ENCODE measurements at regions of chr13 and their contacts with region 1.

Region 1: GRCh38 chr13:75418997-75419396 is 63.0 kb downstream of the TBC1D4 start:
- DNase-seq: no peak
- H3K4me3 ChIP-seq: no peak overlapping the region
- H3K27ac ChIP-seq: peak overlapping the region in 1 of 2 donors; percentile 19
- H3K4me1 ChIP-seq: peaks cover 0 to 26% of the 10 kb centered on the region in 2 donors
- H3K27me3 ChIP-seq: no peaks in the 10 kb centered on the region
- CTCF ChIP-seq: no peak
- POLR2A ChIP-seq: no peak

Region 2: DNA sequence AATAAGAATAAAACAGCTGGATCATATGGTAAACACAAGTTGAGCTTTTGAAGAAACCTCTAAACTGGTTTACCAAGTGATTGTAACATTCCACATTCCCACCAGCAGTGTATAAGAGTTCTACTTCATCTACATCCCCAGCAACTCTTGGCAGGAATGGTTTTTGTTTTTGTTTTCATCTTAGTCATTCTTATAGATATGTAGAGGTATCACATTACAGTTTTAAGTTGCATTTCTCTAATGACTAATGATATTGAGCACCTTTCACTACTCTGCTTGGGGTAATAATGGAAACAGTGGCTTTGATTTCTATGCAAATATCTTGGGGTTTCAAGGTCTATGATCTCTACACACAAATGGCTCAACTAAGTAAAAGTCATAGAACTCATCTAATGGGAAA is 551.5 kb before region 1 on chr13:
- intact Hi-C with region 1: no loop called
- DNase-seq: no peak
- H3K4me3 ChIP-seq: no peak overlapping the region
- H3K27ac ChIP-seq: no peak overlapping the region
- H3K4me1 ChIP-seq: no peaks in the 10 kb centered on the region
- H3K27me3 ChIP-seq: no peaks in the 10 kb centered on the region
- CTCF ChIP-seq: no peak
- POLR2A ChIP-seq: no peak

Region 3: GRCh38 chr13:75402787-75403186 is 16.2 kb before region 1 on chr13:
- intact Hi-C with region 1: loop called (anchors 1 kb)
- DNase-seq: no peak
- H3K4me3 ChIP-seq: no peak overlapping the region
- H3K27ac ChIP-seq: no peak overlapping the region
- H3K4me1 ChIP-seq: no peaks in the 10 kb centered on the region
- H3K27me3 ChIP-seq: no peaks in the 10 kb centered on the region
- CTCF ChIP-seq: no peak
- POLR2A ChIP-seq: no peak

Region 4: DNA sequence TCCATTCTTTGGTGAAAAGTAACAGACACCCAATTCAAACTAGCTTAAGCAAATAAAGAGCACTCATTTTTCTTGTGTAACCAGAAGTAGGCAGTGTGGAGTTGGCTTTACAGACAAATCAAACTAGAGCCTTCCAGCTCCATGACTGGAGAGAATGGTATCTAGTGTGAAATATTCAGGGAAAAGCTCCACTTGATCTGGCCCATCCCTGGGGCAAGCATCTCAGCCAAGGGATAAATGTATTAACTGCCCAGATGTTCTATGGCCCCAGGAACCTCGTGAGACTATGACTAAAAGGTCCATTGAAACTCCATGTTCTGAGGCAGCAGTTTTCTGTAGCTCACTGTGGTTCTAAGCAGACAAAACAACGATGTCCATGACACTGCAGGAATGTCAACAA is 13.0 kb after region 1 on chr13:
- intact Hi-C with region 1: no loop called
- DNase-seq: no peak
- H3K4me3 ChIP-seq: no peak overlapping the region
- H3K27ac ChIP-seq: no peak overlapping the region
- H3K4me1 ChIP-seq: no peaks in the 10 kb centered on the region
- H3K27me3 ChIP-seq: no peaks in the 10 kb centered on the region
- CTCF ChIP-seq: no peak
- POLR2A ChIP-seq: no peak

Measured in breast epithelium (tissue), 4 donors.